ENCODE measurements at regions of chrX and their contacts with region 1.

Region 1: GRCh38 chrX:135484641-135485289 is 35.7 kb upstream of the INTS6L start:
- DNase-seq: no peak
- H3K4me3 ChIP-seq: no peak overlapping the region
- H3K27ac ChIP-seq: no peak overlapping the region
- H3K4me1 ChIP-seq: no peaks in the 10 kb centered on the region
- H3K27me3 ChIP-seq: no peaks in the 10 kb centered on the region
- CTCF ChIP-seq: peak; percentile 32 to 57 (median 44)

Region 2: DNA sequence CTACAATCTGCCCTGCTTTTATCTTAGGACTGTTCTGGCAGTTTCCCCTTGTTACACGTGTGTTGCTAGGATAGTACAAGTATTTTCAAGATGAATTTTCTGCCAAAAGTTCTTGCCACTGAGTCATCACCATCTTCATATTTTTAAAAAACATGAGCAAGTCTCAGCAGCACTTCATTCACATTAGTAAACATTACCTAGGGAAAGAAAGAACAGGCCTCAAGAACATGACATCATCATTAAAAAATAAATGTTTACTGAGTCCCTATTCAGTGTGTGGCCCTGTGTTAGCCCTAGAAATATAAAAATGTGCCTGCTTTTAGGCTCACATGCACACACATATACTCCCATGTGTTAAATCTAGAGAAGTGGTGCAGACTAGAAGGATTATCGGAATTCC is 1480.7 kb before region 1 on chrX:
- intact Hi-C with region 1: no loop called
- DNase-seq: no peak
- H3K4me3 ChIP-seq: no peak overlapping the region
- H3K27ac ChIP-seq: no peak overlapping the region
- H3K4me1 ChIP-seq: no peaks in the 10 kb centered on the region
- H3K27me3 ChIP-seq: no peaks in the 10 kb centered on the region
- CTCF ChIP-seq: no peak

Region 3: DNA sequence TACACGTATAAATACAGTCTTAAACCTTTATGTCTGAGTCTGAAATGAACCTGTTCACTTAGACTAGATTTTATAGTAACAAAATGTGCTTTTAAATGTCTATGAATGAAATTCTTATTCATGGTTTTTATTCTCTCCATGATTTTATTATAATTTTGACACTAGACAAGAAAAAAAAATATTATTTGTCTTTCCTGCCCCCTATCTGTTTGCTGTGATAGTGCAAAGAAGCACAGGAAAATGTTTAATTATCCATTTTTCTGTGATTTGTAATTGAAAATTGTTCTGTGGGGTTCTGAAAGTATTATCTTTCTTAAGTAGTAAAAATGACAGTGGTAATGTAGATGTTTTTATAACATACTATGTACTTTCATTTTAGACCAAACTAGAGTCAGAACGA is 87.7 kb after region 1 on chrX:
- intact Hi-C with region 1: loop called (anchors 2 kb)
- DNase-seq: no peak
- H3K4me3 ChIP-seq: no peak overlapping the region
- H3K27ac ChIP-seq: no peak overlapping the region
- H3K4me1 ChIP-seq: no peaks in the 10 kb centered on the region
- H3K27me3 ChIP-seq: no peaks in the 10 kb centered on the region
- CTCF ChIP-seq: peak in 2 of 3 experiments; percentile 30 to 44